ENCODE measurements at regions of chr1 and their contacts with region 1.

Region 1: GRCh38 chr1:44029906-44030604 is 1.2 kb downstream of the SLC6A9 start:
- DNase-seq: peak; percentile 93
- H3K4me3 Mint-ChIP-seq: peak overlapping the region; percentile 92
- H3K27ac Mint-ChIP-seq: peak overlapping the region; percentile 93
- H3K4me1 Mint-ChIP-seq: peaks cover 25% of the 10 kb centered on the region
- H3K27me3 Mint-ChIP-seq: no peaks in the 10 kb centered on the region

Region 2: DNA sequence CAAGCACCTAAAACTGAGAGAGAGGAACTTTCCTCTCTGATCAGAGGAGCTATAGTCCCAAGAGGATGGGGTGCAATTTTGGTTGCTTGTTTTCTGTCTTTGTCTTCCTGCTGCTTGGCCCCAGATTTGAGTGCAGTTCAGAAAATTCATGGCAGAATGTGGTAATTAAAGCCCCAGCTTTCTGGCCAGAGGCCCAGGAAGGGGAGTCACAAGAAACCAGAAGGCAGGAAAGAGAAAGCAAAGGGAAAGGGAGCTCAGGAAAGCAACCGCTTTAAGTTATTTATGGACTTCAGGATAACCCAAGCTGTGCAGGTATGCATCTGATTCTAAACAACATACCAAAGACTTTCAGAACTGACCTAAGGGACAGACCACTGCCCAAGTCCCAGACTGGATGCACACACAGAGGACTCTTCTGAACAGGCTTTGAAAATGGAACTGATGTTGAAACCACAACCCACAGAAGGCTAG is 233.9 kb before region 1 on chr1:
- CTCF ChIA-PET with region 1: no interaction called
- intact Hi-C with region 1: no loop called
- DNase-seq: no peak
- H3K4me3 Mint-ChIP-seq: no peak overlapping the region
- H3K27ac Mint-ChIP-seq: no peak overlapping the region
- H3K4me1 Mint-ChIP-seq: no peaks in the 10 kb centered on the region
- H3K27me3 Mint-ChIP-seq: no peaks in the 10 kb centered on the region

Region 3: GRCh38 chr1:43946236-43947060 is 83.6 kb before region 1 on chr1 and contains the start of gene IPO13:
- CTCF ChIA-PET with region 1: no interaction called
- intact Hi-C with region 1: loop called (anchors 1 kb)
- DNase-seq: peak; percentile 97
- H3K4me3 Mint-ChIP-seq: peak within 1 kb of the TSS; percentile 90
- H3K27ac Mint-ChIP-seq: peak within 1 kb of the TSS; percentile 88
- H3K4me1 Mint-ChIP-seq: peaks cover 39% of the 10 kb centered on the region
- H3K27me3 Mint-ChIP-seq: no peaks in the 10 kb centered on the region
- total RNA-seq, gene IPO13: 8.0 to 12.4 TPM

Region 4: DNA sequence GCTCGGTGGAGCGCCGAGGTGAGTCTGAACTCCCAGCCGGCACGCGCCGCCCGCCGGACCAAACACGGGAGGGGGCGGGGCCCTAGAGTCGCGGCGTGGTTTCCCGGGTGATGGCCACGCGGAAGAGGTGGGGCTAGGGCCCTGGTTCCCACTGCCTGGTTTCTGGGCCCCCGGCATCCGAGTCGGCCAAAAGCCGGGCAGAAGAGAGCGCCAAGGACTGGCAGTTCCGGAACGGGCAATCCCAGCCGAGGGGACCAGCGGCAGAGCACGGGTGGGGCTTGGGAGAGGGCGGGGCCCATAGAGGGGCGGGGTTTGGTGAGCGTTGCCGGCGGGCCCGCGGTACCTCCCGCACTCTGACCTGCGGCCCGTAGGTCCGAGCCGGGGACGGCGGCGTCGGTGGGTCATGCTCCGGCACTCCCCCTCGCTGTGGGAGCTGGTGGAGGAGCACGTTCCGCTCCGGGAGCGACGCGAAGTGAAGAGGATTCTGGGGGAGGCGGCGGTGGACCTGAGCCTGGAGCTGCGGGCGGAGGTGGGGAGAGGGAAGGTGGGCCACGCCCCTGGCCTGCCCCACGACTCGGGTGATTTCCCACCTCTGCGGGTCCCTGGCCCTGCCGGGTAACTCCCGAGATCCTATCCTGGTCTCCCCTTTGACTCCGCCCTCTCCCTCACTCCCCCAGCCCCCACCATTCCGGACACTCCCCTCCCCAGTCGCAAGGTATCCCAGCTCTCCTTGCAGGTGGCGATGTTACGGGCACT is 38.4 kb before region 1 on chr1 and contains the start of gene CCDC24:
- CTCF ChIA-PET with region 1: no interaction called
- intact Hi-C with region 1: loop called (anchors 1 kb)
- DNase-seq: peak; percentile 74
- H3K4me3 Mint-ChIP-seq: peak within 1 kb of the TSS; percentile 89
- H3K27ac Mint-ChIP-seq: peak within 1 kb of the TSS; percentile 53
- H3K4me1 Mint-ChIP-seq: peaks cover 5% of the 10 kb centered on the region
- H3K27me3 Mint-ChIP-seq: no peaks in the 10 kb centered on the region
- total RNA-seq, gene CCDC24: 0.91 to 1.6 TPM

Region 5: GRCh38 chr1:44048816-44049215 is 18.8 kb after region 1 on chr1:
- CTCF ChIA-PET with region 1: interaction called, 61 read pairs
- intact Hi-C with region 1: loop called (anchors 1 kb)
- DNase-seq: no peak
- H3K4me3 Mint-ChIP-seq: no peak overlapping the region
- H3K27ac Mint-ChIP-seq: peak overlapping the region; percentile 47
- H3K4me1 Mint-ChIP-seq: peaks cover 21% of the 10 kb centered on the region
- H3K27me3 Mint-ChIP-seq: peaks cover 11% of the 10 kb centered on the region

Region 6: GRCh38 chr1:44275991-44276405 is 245.9 kb after region 1 on chr1:
- CTCF ChIA-PET with region 1: no interaction called
- intact Hi-C with region 1: no loop called
- DNase-seq: no peak
- H3K4me3 Mint-ChIP-seq: no peak overlapping the region
- H3K27ac Mint-ChIP-seq: no peak overlapping the region
- H3K4me1 Mint-ChIP-seq: peaks cover 22% of the 10 kb centered on the region
- H3K27me3 Mint-ChIP-seq: no peaks in the 10 kb centered on the region

Region 7: DNA sequence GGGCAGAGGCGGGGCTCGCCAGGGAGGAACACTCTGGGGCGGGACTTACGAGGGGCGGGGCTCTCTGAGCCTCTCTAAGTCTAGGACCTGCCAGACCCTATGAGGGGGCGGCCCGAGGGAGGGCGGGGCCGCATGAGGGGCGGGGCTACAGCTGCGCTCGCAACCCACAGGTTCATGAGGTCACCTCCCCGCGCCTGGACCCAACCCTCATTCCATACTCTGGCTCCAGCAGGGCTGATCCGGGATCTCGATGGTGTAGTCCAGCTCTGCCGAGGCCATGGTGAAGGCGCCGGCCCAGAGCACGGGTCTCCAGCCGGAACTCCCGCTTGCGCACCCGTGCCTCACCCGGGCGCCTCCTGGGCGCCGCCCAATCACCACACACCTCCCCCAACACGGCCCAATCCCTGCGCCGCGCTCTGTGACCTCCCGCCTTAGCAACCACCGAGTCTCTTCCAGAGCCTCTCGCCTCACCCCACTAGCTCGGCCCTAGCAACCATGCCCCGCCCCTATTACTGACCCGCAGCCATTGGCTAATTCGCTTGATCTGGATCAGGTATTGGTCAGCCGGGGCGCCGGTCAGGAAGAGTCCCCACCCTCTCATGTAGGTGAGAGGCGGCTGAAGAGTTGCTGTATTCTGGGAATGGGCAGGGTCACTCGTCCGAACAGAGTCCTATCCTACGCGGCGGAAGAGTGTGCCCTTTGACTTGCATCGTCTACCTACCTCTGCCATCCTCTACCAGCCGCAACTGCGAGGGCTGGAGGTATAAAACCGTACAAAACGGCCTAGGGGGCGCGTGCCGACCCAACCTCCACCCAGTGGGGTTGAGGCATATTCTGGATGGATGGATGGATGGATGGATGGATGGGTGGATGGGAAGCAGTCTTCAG is 644.3 kb after region 1 on chr1 and contains the starts of genes ARMH1 and TMEM53:
- CTCF ChIA-PET with region 1: no interaction called
- intact Hi-C with region 1: loop called (anchors 5 kb)
- DNase-seq: peak; percentile 99
- H3K4me3 Mint-ChIP-seq: peak within 1 kb of the TSS; percentile 82
- H3K27ac Mint-ChIP-seq: peak within 1 kb of the TSS; percentile 78
- H3K4me1 Mint-ChIP-seq: peaks cover 18% of the 10 kb centered on the region
- H3K27me3 Mint-ChIP-seq: no peaks in the 10 kb centered on the region
- total RNA-seq, gene ARMH1: 143 to 155 TPM
- total RNA-seq, gene TMEM53: 4.5 to 4.9 TPM